Endothelial cell of umbilical vein (primary cell): ENCODE measurements at regions of chr7 and their contacts with region 1.

Region 1: DNA sequence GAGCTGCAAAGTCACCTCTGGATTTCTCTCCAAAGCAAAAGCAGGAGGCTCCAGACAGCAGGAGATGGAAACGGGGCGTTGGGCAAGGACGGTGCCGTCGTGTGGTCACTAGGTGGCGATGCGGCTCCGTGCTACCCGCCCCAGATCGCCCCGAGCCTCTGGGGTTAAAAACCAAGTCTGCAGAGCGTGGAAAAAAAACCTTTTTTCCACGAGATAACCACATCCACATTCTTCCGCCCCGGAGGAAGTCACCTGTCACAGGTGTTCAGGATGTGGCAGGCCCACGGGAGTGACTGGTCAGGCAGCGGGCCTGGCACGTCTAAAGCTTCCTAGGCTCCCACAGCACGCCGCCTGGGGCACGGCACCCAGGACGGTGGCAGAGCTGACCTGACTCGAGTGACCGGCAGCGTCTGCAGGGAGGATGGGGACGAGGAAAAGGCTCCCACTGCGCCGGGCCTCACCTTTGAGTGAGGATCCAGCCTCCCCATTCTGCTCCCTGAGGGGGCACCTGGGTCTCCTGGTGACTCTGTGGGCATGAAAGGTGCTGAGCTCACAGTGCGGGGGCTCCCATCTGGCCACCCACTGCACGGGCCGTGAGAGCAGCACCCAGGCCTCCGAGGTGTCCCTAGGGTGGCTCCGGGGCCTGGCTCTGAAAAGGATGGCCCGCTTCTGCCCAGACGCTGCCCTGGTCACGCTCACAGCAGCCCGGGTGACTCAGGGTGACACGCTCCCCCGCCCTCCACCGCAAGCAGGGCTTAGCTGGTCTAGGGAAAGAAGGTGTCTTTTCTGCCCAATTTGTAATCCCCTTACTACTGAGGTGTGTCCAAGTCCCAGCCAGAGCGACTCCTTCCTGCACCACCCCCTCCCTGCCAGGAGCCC is 71.3 kb upstream of the TNRC18 start:
- DNase-seq: peak; percentile 72
- H3K4me3 ChIP-seq: no peak overlapping the region
- H3K27ac ChIP-seq: no peak overlapping the region
- H3K4me1 ChIP-seq: peaks cover 4% of the 10 kb centered on the region
- H3K27me3 ChIP-seq: no peaks in the 10 kb centered on the region
- CTCF ChIP-seq: peak; percentile 79 to 96
- POLR2A ChIP-seq: no peak

Region 2: DNA sequence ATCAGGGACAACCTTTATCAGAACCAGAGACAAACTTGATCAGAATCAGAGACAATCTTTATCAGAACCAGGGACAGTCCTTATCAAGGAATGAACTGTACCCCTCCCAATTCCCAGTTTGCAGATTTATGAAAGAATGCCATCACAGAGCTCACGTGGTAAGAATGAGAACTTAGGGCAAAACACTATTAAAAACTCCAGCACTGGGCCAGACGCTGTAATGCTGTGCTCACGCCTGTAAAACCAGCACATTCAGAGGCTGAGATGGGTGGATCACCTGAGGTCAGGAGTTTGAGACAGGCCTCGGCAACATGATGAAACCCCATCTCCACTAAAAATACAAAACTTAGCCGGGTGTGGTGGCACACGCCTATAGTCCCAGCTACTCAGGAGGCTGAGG is 13.8 kb after region 1 on chr7:
- CTCF ChIA-PET with region 1: interaction called, 12 read pairs
- POLR2A ChIA-PET with region 1: no interaction called
- dilution Hi-C with region 1: no loop called
- intact Hi-C with region 1: no loop called
- DNase-seq: no peak
- H3K4me3 ChIP-seq: no peak overlapping the region
- H3K27ac ChIP-seq: no peak overlapping the region
- H3K4me1 ChIP-seq: peaks cover 20% of the 10 kb centered on the region
- H3K27me3 ChIP-seq: no peaks in the 10 kb centered on the region
- CTCF ChIP-seq: no peak
- POLR2A ChIP-seq: no peak

Region 3: GRCh38 chr7:5526100-5526905 is 31.4 kb after region 1 on chr7:
- CTCF ChIA-PET with region 1: interaction called, 29 read pairs
- POLR2A ChIA-PET with region 1: interaction called, 3 read pairs
- dilution Hi-C with region 1: no loop called
- intact Hi-C with region 1: no loop called
- DNase-seq: peak; percentile 34
- H3K4me3 ChIP-seq: no peak overlapping the region
- H3K27ac ChIP-seq: no peak overlapping the region
- H3K4me1 ChIP-seq: peaks cover 3% of the 10 kb centered on the region
- H3K27me3 ChIP-seq: no peaks in the 10 kb centered on the region
- CTCF ChIP-seq: no peak
- POLR2A ChIP-seq: peak; percentile 69

Region 4: DNA sequence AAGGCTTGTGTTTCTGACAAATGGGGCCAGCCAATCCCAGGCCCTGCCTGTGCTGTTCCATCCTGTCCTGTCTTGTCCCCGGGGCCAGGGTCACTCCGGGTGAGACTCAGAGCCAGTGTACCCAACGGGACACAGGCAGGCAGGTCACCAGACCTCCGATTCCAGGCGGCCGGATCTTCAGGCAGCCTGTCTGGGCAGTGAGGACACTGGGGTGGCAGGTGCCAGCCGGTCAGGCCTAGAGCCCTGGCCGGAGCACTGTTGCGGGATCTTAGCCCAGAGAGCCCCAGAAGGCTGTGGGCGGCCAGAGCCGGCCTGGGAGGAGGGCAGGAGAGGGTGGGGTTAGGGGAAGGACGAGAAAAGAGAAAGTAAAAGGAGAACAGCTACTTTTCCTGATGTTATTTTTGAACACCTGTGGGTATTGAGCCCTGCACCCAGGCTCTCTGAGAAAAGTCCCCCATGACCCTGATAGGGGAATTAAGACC is 63.0 kb after region 1 on chr7:
- CTCF ChIA-PET with region 1: interaction called, 7 read pairs
- POLR2A ChIA-PET with region 1: no interaction called
- dilution Hi-C with region 1: no loop called
- intact Hi-C with region 1: loop called (anchors 1 kb)
- DNase-seq: no peak
- H3K4me3 ChIP-seq: no peak overlapping the region
- H3K27ac ChIP-seq: no peak overlapping the region
- H3K4me1 ChIP-seq: peaks cover 20% of the 10 kb centered on the region
- H3K27me3 ChIP-seq: no peaks in the 10 kb centered on the region
- CTCF ChIP-seq: no peak
- POLR2A ChIP-seq: no peak

Region 5: DNA sequence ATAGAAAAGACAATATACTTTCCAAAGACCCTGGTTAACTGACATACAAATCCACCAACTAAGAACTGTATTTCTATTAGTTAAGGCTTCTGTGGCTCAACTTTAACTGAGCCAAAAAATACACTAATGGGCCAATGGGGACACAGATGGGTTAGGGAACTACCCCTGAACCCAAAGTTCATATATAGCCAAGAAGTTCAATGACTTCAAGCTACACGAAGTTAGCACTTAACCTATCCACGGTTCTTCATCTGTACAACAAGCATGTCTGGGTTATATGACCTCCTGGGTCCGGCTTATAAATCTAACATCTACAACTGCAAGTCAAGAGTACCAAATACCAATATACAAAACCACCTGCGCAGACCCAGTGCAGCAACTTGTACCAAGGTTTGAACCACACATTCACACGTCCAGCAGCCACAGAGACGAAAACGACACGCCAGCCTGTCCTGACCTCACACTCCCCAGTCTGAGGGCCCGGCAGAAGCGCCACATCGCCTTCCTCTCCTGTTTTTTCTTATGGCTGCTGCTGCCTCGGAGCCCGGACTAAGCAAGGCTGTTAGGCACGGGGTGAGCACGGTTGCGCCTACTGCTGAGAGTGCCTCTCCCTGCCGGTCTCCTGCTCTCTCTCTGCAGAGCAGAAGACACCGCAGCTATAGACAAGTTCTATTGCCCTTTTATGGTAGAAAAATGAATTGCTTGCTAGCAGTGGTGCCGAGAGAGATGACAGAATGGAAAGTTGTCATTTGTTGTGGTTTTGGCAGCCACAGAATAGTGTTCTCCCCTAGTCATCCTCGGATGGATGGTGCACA is 200.2 kb after region 1 on chr7:
- CTCF ChIA-PET with region 1: interaction called, 12 read pairs
- POLR2A ChIA-PET with region 1: no interaction called
- dilution Hi-C with region 1: no loop called
- intact Hi-C with region 1: no loop called
- DNase-seq: no peak
- H3K4me3 ChIP-seq: no peak overlapping the region
- H3K27ac ChIP-seq: no peak overlapping the region
- H3K4me1 ChIP-seq: peaks cover 34% of the 10 kb centered on the region
- H3K27me3 ChIP-seq: no peaks in the 10 kb centered on the region
- CTCF ChIP-seq: no peak
- POLR2A ChIP-seq: no peak

Region 6: GRCh38 chr7:5704534-5704922 is 209.6 kb after region 1 on chr7:
- CTCF ChIA-PET with region 1: interaction called, 25 read pairs
- POLR2A ChIA-PET with region 1: no interaction called
- dilution Hi-C with region 1: no loop called
- intact Hi-C with region 1: loop called (anchors 1 kb)
- DNase-seq: peak; percentile 87
- H3K4me3 ChIP-seq: no peak overlapping the region
- H3K27ac ChIP-seq: no peak overlapping the region
- H3K4me1 ChIP-seq: no peaks in the 10 kb centered on the region
- H3K27me3 ChIP-seq: no peaks in the 10 kb centered on the region
- CTCF ChIP-seq: peak; percentile 80 to 81
- POLR2A ChIP-seq: no peak